ENCODE measurements at regions of chr9 and their contacts with region 1.

Region 1: GRCh38 chr9:124126571-124127289 is 115.2 kb downstream of the LHX2 start:
- DNase-seq: peak; percentile 51 to 88 (median 64)
- ATAC-seq: peak in 3 of 4 donors; percentile 59 to 77 (median 71)
- H3K4me3 ChIP-seq: no peak overlapping the region
- H3K27ac ChIP-seq: no peak overlapping the region
- H3K4me1 ChIP-seq: peaks cover 0 to 5% (median 0%) of the 10 kb centered on the region in 12 donors
- H3K27me3 ChIP-seq: peaks cover 0 to 23% (median 0%) of the 10 kb centered on the region in 9 donors
- CTCF ChIP-seq: peak; percentile 94 to 99 (median 97)
- POLR2A ChIP-seq: no peak

Region 2: GRCh38 chr9:124320062-124320973 is 193.6 kb after region 1 on chr9:
- intact Hi-C with region 1: loop called (anchors 1 to 5 kb)
- DNase-seq: peak; percentile 67 to 76 (median 73)
- ATAC-seq: peak; percentile 63 to 89 (median 84)
- H3K4me3 ChIP-seq: no peak overlapping the region
- H3K27ac ChIP-seq: no peak overlapping the region
- H3K4me1 ChIP-seq: peaks cover 0 to 8% (median 1%) of the 10 kb centered on the region in 12 donors
- H3K27me3 ChIP-seq: no peaks in the 10 kb centered on the region
- CTCF ChIP-seq: peak; percentile 76 to 92 (median 85)
- POLR2A ChIP-seq: no peak

Region 3: DNA sequence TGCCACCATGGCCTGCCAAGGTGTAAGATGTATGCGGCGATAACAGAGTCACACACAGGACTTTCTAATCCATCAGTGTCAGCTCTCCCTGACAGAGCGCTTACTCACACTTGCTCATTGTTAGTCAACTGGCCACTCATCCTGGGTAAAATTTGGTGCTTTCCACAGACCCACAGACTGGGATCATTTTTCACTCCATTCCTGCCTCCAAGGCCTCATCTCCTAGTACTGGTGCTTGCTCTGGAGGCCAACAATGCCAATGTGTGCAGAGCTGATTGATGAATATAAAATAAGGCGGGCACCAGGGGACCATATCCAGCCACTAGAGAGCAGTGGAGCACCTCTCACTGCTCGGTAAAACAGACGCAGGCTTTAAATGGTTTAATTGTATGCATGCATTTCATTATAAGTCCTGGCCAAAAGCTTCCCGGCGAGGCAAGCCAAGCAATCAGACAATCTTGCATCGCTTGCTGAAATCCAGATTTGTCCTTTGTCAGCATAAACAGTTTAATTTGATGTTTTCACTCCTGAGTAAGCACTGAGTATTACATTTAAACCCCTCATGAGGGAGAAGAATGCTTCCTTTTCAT is 266.2 kb after region 1 on chr9:
- intact Hi-C with region 1: loop called in 8 of 10 experiments (anchors 5 to 10 kb)
- DNase-seq: no peak
- ATAC-seq: no peak
- H3K4me3 ChIP-seq: no peak overlapping the region
- H3K27ac ChIP-seq: no peak overlapping the region
- H3K4me1 ChIP-seq: peaks cover 0 to 79% (median 38%) of the 10 kb centered on the region in 12 donors
- H3K27me3 ChIP-seq: no peaks in the 10 kb centered on the region
- CTCF ChIP-seq: peak in 1 of 12 donors; percentile 12
- POLR2A ChIP-seq: no peak

Region 4: GRCh38 chr9:124527781-124528180 is 401.1 kb after region 1 on chr9:
- intact Hi-C with region 1: loop called in 5 of 10 experiments (anchors 10 kb)
- DNase-seq: no peak
- ATAC-seq: no peak
- H3K4me3 ChIP-seq: no peak overlapping the region
- H3K27ac ChIP-seq: no peak overlapping the region
- H3K4me1 ChIP-seq: no peaks in the 10 kb centered on the region
- H3K27me3 ChIP-seq: no peaks in the 10 kb centered on the region
- CTCF ChIP-seq: no peak
- POLR2A ChIP-seq: no peak

Region 5: GRCh38 chr9:124537926-124538325 is 411.2 kb after region 1 on chr9:
- intact Hi-C with region 1: loop called in 9 of 10 experiments (anchors 5 to 10 kb)
- DNase-seq: no peak
- ATAC-seq: no peak
- H3K4me3 ChIP-seq: no peak overlapping the region
- H3K27ac ChIP-seq: no peak overlapping the region
- H3K4me1 ChIP-seq: no peaks in the 10 kb centered on the region
- H3K27me3 ChIP-seq: no peaks in the 10 kb centered on the region
- CTCF ChIP-seq: no peak
- POLR2A ChIP-seq: no peak

Measured in heart left ventricle (tissue), 16 donors.